Activated CD8-positive, alpha-beta T cell treated with anti-CD3 and anti-CD28 coated beads for 36 hours (primary cell): ENCODE measurements at regions of chr6 and their contacts with region 1.

Region 1: GRCh38 chr6:125956506-125957390 is at the start of gene HINT3:
- DNase-seq: peak; percentile 99
- ATAC-seq: peak; percentile 86
- H3K4me3 Mint-ChIP-seq: no peak within 1 kb of the TSS
- H3K27ac Mint-ChIP-seq: no peak within 1 kb of the TSS
- H3K4me1 Mint-ChIP-seq: peaks cover 7% of the 10 kb centered on the region
- H3K27me3 Mint-ChIP-seq: peaks cover 4% of the 10 kb centered on the region
- CTCF ChIP-seq: peak; percentile 98
- total RNA-seq, gene HINT3: 8.5 to 8.6 TPM

Region 2: GRCh38 chr6:125512621-125513020 is 444.1 kb before region 1 on chr6:
- CTCF ChIA-PET with region 1: no interaction called
- POLR2A ChIA-PET with region 1: no interaction called
- intact Hi-C with region 1: no loop called
- DNase-seq: peak; percentile 12
- ATAC-seq: no peak
- H3K4me3 Mint-ChIP-seq: no peak overlapping the region
- H3K27ac Mint-ChIP-seq: no peak overlapping the region
- H3K4me1 Mint-ChIP-seq: no peaks in the 10 kb centered on the region
- H3K27me3 Mint-ChIP-seq: peaks cover 4% of the 10 kb centered on the region
- CTCF ChIP-seq: peak; percentile 19

Region 3: DNA sequence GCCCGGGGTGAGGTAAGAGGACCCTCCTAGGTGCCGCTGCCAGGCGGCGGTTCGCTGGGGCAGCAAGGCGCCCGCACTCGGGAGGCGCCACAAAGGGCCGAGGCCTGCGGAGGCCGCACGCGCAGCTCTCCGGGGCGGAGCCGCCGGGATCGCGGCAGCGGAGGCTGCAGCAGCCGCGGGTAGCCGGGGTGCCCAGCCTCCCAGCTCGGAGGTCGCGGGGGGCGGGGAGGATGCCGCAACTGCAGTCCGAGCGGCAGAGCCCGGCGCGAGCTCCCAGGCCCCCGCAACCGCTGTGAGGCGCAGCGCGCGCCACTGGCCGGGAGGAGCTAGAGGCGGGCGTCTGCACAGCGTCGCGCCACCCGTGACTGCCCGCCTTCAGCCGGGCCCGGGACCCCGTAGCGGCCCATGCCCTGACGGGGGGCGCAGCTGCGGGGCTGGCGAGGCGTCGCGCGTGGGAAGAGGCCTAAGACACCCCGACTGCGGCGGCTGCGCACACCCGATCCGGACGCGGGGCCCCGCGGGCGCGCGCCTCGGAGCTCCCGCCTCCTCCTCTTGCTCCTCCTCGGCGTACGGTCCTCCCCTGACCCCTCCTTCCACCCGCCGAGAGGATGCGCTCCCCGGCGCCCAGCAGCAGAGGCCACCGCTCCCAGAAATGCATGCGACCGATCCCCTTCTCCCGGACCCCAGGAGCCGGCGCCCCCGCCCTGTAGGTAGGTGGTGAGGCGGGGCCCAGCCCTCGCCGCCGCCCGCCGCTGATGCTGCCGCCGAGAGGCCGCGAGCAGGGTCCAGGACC is 166.2 kb before region 1 on chr6 and contains the start of gene NCOA7:
- CTCF ChIA-PET with region 1: interaction called, 67 read pairs
- POLR2A ChIA-PET with region 1: interaction called, 21 read pairs
- intact Hi-C with region 1: no loop called
- DNase-seq: peak; percentile 80
- ATAC-seq: peak; percentile 81
- H3K4me3 Mint-ChIP-seq: peak within 1 kb of the TSS; percentile 94
- H3K27ac Mint-ChIP-seq: peak within 1 kb of the TSS; percentile 98
- H3K4me1 Mint-ChIP-seq: peaks cover 52% of the 10 kb centered on the region
- H3K27me3 Mint-ChIP-seq: no peaks in the 10 kb centered on the region
- CTCF ChIP-seq: no peak
- total RNA-seq, gene NCOA7: 43.4 to 44.9 TPM

Region 4: GRCh38 chr6:125899726-125900182 is 57.0 kb before region 1 on chr6:
- CTCF ChIA-PET with region 1: interaction called, 37 read pairs
- POLR2A ChIA-PET with region 1: no interaction called
- intact Hi-C with region 1: no loop called
- DNase-seq: no peak
- ATAC-seq: no peak
- H3K4me3 Mint-ChIP-seq: no peak overlapping the region
- H3K27ac Mint-ChIP-seq: no peak overlapping the region
- H3K4me1 Mint-ChIP-seq: peaks cover 11% of the 10 kb centered on the region
- H3K27me3 Mint-ChIP-seq: no peaks in the 10 kb centered on the region
- CTCF ChIP-seq: no peak

Region 5: GRCh38 chr6:125918681-125919566 is 37.8 kb before region 1 on chr6:
- CTCF ChIA-PET with region 1: interaction called, 92 read pairs
- POLR2A ChIA-PET with region 1: interaction called, 6 read pairs
- intact Hi-C with region 1: loop called (anchors 5 kb)
- DNase-seq: peak; percentile 67
- ATAC-seq: peak; percentile 97
- H3K4me3 Mint-ChIP-seq: peak overlapping the region; percentile 85
- H3K27ac Mint-ChIP-seq: peak overlapping the region; percentile 97
- H3K4me1 Mint-ChIP-seq: peaks cover 34% of the 10 kb centered on the region
- H3K27me3 Mint-ChIP-seq: no peaks in the 10 kb centered on the region
- CTCF ChIP-seq: no peak

Region 6: GRCh38 chr6:125944434-125944816 is 12.3 kb before region 1 on chr6:
- CTCF ChIA-PET with region 1: interaction called, 16 read pairs
- POLR2A ChIA-PET with region 1: no interaction called
- intact Hi-C with region 1: no loop called
- DNase-seq: no peak
- ATAC-seq: no peak
- H3K4me3 Mint-ChIP-seq: no peak overlapping the region
- H3K27ac Mint-ChIP-seq: no peak overlapping the region
- H3K4me1 Mint-ChIP-seq: peaks cover 7% of the 10 kb centered on the region
- H3K27me3 Mint-ChIP-seq: peaks cover 11% of the 10 kb centered on the region
- CTCF ChIP-seq: no peak

Region 7: DNA sequence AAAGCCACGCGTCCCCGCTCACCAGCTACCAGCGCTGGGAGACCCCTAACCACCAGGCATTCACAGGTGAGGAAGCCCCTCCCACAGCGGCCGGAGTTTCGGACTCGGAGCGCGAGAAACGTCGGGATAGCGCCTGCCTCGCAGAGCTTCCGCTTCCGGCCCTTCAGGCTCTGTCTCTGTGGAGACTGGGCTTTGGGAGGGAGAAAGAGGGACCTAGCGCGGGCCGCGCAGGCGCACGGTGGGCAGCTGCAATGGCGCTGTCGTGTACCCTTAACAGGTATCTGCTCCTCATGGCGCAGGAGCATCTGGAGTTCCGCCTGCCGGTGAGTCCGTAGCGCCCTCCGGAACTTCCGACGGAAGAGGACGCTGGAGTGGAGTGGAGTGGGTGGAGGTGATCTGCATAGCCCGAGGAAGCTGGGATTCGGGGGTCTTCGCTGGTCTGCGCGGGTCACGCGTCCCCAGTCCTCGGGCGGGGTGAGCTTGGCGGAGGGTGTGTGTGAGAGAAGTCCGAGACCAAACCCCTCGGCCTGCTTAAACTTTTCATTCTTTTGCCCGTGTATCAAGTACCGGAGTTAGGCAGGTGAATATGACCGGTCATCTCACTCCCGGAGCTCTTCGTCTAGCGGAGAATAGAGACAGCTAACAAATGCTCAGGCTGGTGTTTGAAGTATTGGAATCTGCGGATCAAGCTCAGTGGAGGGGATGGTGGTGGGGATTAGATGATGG is 29.7 kb after region 1 on chr6 and contains the start of gene TRMT11:
- CTCF ChIA-PET with region 1: interaction called, 28 read pairs
- POLR2A ChIA-PET with region 1: interaction called, 16 read pairs
- intact Hi-C with region 1: no loop called
- DNase-seq: peak; percentile 87
- ATAC-seq: peak; percentile 96
- H3K4me3 Mint-ChIP-seq: no peak within 1 kb of the TSS
- H3K27ac Mint-ChIP-seq: peak within 1 kb of the TSS; percentile 21
- H3K4me1 Mint-ChIP-seq: peaks cover 20% of the 10 kb centered on the region
- H3K27me3 Mint-ChIP-seq: no peaks in the 10 kb centered on the region
- CTCF ChIP-seq: no peak
- total RNA-seq, gene TRMT11: 41.5 to 49.1 TPM